ENCODE measurements at regions of chr5 and their contacts with region 1.

Region 1: DNA sequence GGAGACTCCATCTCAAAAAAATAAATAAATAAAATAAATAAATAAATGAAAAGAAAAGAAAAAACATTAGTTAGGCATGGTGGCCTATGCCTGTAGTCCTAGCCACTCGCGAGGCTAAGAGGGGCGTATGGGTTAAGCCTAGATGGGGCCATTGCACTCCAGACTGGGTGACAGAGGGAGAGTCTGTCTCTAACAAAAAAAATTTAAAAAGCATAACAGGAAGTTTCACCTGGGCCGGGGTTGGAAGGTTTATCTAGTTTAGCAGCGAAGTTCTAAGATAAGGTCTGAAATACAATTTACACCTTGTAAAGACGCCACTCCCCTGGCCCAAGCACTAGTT is 18.0 kb downstream of the ZMAT2 start:
- DNase-seq: no peak
- ATAC-seq: peak; percentile 4
- H3K4me3 ChIP-seq: peak overlapping the region in 1 of 2 experiments; percentile 42; a peak in 1 of 4 replicates
- H3K27ac ChIP-seq: peak overlapping the region; percentile 80
- H3K4me1 ChIP-seq: peaks cover 12 to 28% of the 10 kb centered on the region in 2 experiments
- H3K27me3 ChIP-seq: no peaks in the 10 kb centered on the region
- CTCF ChIP-seq: no peak
- POLR2A ChIP-seq: no peak
- RAD21 ChIP-seq: no peak

Region 2: GRCh38 chr5:140362860-140363630 is 355.2 kb before region 1 on chr5:
- CTCF ChIA-PET with region 1: interaction called, 27 read pairs
- POLR2A ChIA-PET with region 1: interaction called, 3 read pairs
- RAD21 ChIA-PET with region 1: no interaction called
- intact Hi-C with region 1: loop called (anchors 2 kb)
- DNase-seq: peak; percentile 65
- ATAC-seq: peak; percentile 90
- H3K4me3 ChIP-seq: peak overlapping the region; percentile 31 to 49
- H3K27ac ChIP-seq: no peak overlapping the region; the same call in 1 of the 2 replicates
- H3K4me1 ChIP-seq: peaks cover 3 to 38% of the 10 kb centered on the region in 2 experiments; a peak in 3 of 4 replicates
- H3K27me3 ChIP-seq: no peaks in the 10 kb centered on the region
- CTCF ChIP-seq: peak in 2 of 3 experiments; percentile 94 to 99; a peak in 4 of 6 replicates
- POLR2A ChIP-seq: no peak
- RAD21 ChIP-seq: no peak

Region 3: GRCh38 chr5:140372971-140373487 is 345.2 kb before region 1 on chr5:
- CTCF ChIA-PET with region 1: interaction called, 7 read pairs
- POLR2A ChIA-PET with region 1: no interaction called
- RAD21 ChIA-PET with region 1: no interaction called
- intact Hi-C with region 1: loop called (anchors 2 kb)
- DNase-seq: peak; percentile 71
- ATAC-seq: peak; percentile 94
- H3K4me3 ChIP-seq: no peak overlapping the region
- H3K27ac ChIP-seq: no peak overlapping the region
- H3K4me1 ChIP-seq: peaks cover 5 to 10% of the 10 kb centered on the region in 2 experiments; a peak in 3 of 4 replicates
- H3K27me3 ChIP-seq: no peaks in the 10 kb centered on the region
- CTCF ChIP-seq: peak; percentile 68 to 88 (median 80); a peak in 5 of 6 replicates
- POLR2A ChIP-seq: no peak
- RAD21 ChIP-seq: peak; percentile 93

Region 4: DNA sequence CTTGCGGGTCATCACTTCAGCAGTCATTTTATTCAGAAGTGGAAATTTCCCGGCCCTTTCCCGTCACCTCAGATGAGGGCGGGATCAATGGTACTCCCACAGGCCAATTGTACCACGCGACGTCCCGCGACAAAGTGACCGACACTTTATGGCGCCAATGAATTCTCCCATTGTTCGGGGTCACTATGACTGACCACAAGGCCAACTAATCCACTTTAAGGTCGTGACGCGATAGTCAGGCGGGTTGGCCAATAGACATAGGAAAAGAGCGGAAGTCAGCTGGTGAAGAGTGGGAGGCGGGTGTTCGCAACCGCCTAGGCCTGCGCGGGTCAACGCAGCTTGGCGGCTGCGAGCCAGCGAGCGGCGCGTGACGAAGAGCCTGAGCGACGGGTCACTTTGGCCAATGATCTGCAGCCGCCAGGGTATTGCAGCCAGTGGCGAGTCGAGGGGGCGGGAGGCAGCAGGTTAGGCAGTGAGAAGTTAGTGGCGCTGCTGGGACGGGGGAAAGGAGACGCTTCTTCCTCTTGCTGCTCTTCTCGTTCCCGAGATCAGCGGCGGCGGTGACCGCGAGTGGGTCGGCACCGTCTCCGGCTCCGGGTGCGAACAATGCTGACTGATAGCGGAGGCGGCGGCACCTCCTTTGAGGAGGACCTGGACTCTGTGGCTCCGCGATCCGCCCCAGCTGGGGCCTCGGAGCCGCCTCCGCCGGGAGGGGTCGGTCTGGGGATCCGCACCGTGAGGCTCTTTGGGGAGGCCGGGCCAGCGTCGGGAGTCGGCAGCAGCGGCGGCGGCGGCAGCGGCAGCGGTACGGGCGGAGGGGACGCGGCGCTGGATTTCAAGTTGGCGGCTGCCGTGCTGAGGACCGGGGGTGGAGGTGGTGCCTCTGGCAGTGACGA is 316.6 kb before region 1 on chr5 and contains the start of gene ANKHD1:
- CTCF ChIA-PET with region 1: no interaction called
- POLR2A ChIA-PET with region 1: interaction called, 4 read pairs
- RAD21 ChIA-PET with region 1: interaction called in 1 of 2 experiments, 3 read pairs
- intact Hi-C with region 1: loop called (anchors 2 kb)
- DNase-seq: peak; percentile 100
- ATAC-seq: peak; percentile 80
- H3K4me3 ChIP-seq: peak within 1 kb of the TSS; percentile 81 to 99
- H3K27ac ChIP-seq: peak within 1 kb of the TSS; percentile 92
- H3K4me1 ChIP-seq: peaks cover 23 to 28% of the 10 kb centered on the region in 2 experiments
- H3K27me3 ChIP-seq: no peaks in the 10 kb centered on the region
- CTCF ChIP-seq: no peak
- POLR2A ChIP-seq: peak; percentile 40
- RAD21 ChIP-seq: no peak
- total RNA-seq, gene ANKHD1: 80.8 TPM

Region 5: DNA sequence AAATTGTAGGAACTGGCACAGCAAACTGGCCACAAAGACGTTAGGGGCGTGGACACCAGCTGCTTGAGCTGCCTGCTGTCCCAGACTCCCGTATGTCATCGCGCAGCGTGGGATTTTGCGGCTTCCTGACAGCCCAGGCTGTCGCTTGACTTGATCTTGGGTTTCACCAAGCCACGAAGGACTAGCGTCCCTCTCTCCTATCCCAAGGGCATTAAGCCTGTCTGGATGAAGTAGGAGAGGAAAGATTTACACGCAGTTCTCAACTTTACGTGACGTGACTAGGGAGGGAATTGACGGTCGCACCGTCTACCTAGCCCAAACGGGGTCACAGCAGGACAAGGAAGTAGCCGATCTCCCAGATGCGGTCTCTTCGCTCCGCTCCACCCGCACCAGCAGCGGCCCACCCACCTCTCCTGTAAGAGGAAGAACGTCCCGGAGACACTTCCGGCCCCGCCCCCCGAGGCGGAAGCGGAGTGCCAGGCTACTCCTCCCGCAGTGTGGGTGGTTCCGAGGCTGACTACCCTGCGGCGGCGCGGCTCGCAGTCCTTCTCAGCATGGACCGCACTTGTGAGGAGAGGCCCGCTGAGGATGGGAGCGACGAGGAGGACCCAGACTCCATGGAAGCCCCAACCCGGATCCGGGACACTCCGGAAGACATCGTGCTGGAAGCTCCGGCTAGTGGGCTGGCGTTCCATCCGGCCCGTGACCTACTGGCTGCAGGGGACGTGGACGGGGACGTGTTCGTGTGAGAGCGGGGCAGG is 53.7 kb before region 1 on chr5 and contains the start of gene WDR55:
- CTCF ChIA-PET with region 1: no interaction called
- POLR2A ChIA-PET with region 1: no interaction called
- RAD21 ChIA-PET with region 1: no interaction called
- intact Hi-C with region 1: loop called (anchors 2 kb)
- DNase-seq: peak; percentile 83
- ATAC-seq: peak; percentile 95
- H3K4me3 ChIP-seq: peak within 1 kb of the TSS; percentile 94 to 96
- H3K27ac ChIP-seq: peak within 1 kb of the TSS; percentile 74
- H3K4me1 ChIP-seq: peaks cover 2 to 16% of the 10 kb centered on the region in 2 experiments; a peak in 2 of 4 replicates
- H3K27me3 ChIP-seq: no peaks in the 10 kb centered on the region
- CTCF ChIP-seq: no peak
- POLR2A ChIP-seq: peak; percentile 85
- RAD21 ChIP-seq: no peak
- total RNA-seq, gene WDR55: 37.2 TPM